Ovary (tissue), 10 donors: ENCODE measurements at regions of chr2 and their contacts with region 1.

Region 1: DNA sequence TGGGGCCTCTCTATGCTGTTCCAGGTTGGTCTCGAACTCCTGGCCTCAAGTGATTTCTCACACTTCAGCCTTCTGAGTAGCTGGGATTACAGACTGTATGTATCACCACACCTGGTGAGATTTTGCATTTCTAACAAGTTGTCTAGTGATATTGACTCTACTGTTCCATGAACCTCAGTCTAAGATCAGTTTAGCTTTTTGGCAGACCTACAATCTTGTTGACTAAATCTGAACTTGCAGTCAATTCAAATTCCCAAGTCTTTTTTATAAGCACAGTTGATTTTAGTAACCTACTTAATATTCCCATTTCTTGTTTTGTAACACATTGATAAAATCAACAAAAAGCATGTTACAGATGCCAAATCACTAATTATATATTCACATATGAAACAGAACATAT is 266.1 kb upstream of the CYP26B1 start:
- DNase-seq: no peak
- H3K4me3 ChIP-seq: no peak overlapping the region
- H3K27ac ChIP-seq: no peak overlapping the region
- H3K4me1 ChIP-seq: peaks cover 5% of the 10 kb centered on the region
- H3K27me3 ChIP-seq: no peaks in the 10 kb centered on the region
- CTCF ChIP-seq: no peak
- EP300 ChIP-seq: no peak
- POLR2A ChIP-seq: no peak

Region 2: DNA sequence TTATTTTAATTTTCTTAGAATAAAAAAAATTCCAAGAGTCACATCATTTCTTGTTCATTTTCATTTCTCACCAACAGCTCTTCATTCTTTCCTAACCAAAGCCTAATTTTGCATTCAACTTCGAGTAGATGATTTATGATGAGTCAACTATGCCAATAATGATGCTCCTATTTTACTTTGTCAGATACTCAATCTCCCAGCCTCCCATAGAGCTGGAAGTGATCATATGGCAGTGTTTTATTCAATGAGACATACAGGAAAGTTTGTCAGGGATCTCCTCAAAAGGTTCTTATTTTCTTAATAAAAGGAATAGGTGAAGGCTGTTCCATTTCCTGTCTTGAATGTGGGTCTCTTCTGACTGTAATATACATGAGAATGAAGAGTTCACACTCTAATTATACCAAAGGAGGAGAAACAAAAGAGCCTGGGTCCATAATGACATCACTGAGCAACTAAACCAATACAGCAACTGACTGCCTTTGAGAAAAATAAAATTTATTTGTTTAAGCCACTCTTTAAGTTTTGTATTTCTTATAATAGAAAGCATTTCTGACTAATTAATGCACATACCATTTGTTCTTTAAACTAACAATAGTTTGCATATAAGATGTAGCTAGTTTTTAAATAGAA is 34.8 kb before region 1 on chr2:
- intact Hi-C with region 1: loop called in 1 of 4 experiments (anchors 2 kb)
- DNase-seq: no peak
- H3K4me3 ChIP-seq: no peak overlapping the region
- H3K27ac ChIP-seq: no peak overlapping the region
- H3K4me1 ChIP-seq: no peaks in the 10 kb centered on the region
- H3K27me3 ChIP-seq: no peaks in the 10 kb centered on the region
- CTCF ChIP-seq: no peak
- EP300 ChIP-seq: no peak
- POLR2A ChIP-seq: no peak